ENCODE measurements at regions of chr7 and their contacts with region 1.

Region 1: DNA sequence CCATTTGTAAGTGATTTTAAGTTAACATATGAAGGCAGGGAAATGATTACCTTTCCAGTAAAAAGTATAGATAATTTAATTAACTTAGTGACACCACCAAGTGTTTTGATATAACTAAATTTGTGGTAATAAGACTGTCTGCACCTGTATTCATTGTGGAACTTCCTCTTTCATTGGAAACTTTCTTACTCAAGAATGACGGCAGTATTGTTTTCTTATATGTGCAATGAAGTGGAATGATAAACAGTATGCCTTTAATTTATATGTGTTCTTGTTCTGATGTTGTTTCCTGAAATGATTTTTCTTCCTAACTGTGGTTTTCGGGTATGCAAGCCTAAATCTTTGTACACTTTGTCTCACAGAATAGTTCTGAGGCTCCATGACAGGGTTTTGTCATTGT is 46.4 kb downstream of the CASD1 start:
- DNase-seq: peak; percentile 57
- ATAC-seq: peak; percentile 88
- H3K4me3 ChIP-seq: peak overlapping the region in 1 of 5 experiments; percentile 27
- H3K4me3 Mint-ChIP-seq: peak overlapping the region; percentile 58
- H3K27ac ChIP-seq: peak overlapping the region in 1 of 2 donors; percentile 48
- H3K27ac Mint-ChIP-seq: peak overlapping the region; percentile 75
- H3K4me1 ChIP-seq: peaks cover 19 to 32% of the 10 kb centered on the region in 2 donors
- H3K4me1 Mint-ChIP-seq: peaks cover 39% of the 10 kb centered on the region
- H3K27me3 ChIP-seq: no peaks in the 10 kb centered on the region
- H3K27me3 Mint-ChIP-seq: no peaks in the 10 kb centered on the region
- CTCF ChIP-seq: no peak

Region 2: GRCh38 chr7:94509879-94510581 is 46.0 kb before region 1 on chr7:
- CTCF ChIA-PET with region 1: no interaction called
- POLR2A ChIA-PET with region 1: no interaction called
- intact Hi-C with region 1: loop called (anchors 1 kb)
- DNase-seq: peak; percentile 88
- ATAC-seq: peak; percentile 76
- H3K4me3 ChIP-seq: peak overlapping the region; percentile 31 to 80 (median 73)
- H3K4me3 Mint-ChIP-seq: peak overlapping the region; percentile 88
- H3K27ac ChIP-seq: peak overlapping the region; percentile 77 to 92
- H3K27ac Mint-ChIP-seq: peak overlapping the region; percentile 93
- H3K4me1 ChIP-seq: peaks cover 18 to 20% of the 10 kb centered on the region in 2 donors
- H3K4me1 Mint-ChIP-seq: peaks cover 46% of the 10 kb centered on the region
- H3K27me3 ChIP-seq: no peaks in the 10 kb centered on the region
- H3K27me3 Mint-ChIP-seq: no peaks in the 10 kb centered on the region
- CTCF ChIP-seq: peak; percentile 5

Region 3: DNA sequence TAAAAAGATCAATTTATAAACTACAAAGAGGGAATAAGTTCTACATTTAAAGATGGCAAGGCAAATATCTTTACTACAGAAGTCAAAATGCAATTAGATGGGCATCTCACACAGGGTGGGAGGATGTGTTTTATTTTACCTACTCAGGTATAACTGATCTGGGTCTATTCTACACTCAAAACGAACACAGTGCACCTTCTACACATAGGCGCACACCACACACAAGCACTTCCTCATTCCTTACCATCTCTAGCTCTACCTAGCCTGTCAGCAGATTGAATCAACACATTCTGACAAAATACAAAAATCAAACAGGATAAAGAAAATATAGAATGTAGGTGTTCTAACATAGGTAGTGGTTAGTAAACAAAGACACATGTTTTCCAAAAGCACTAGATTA is 35.1 kb after region 1 on chr7:
- CTCF ChIA-PET with region 1: no interaction called
- POLR2A ChIA-PET with region 1: no interaction called
- intact Hi-C with region 1: loop called (anchors 5 kb)
- DNase-seq: peak; percentile 51
- ATAC-seq: peak; percentile 83
- H3K4me3 ChIP-seq: peak overlapping the region in 4 of 5 experiments; percentile 19 to 55 (median 42)
- H3K4me3 Mint-ChIP-seq: peak overlapping the region; percentile 67
- H3K27ac ChIP-seq: peak overlapping the region; percentile 36 to 52
- H3K27ac Mint-ChIP-seq: peak overlapping the region; percentile 1
- H3K4me1 ChIP-seq: peaks cover 11 to 17% of the 10 kb centered on the region in 2 donors
- H3K4me1 Mint-ChIP-seq: peaks cover 19% of the 10 kb centered on the region
- H3K27me3 ChIP-seq: no peaks in the 10 kb centered on the region
- H3K27me3 Mint-ChIP-seq: no peaks in the 10 kb centered on the region
- CTCF ChIP-seq: no peak

Region 4: DNA sequence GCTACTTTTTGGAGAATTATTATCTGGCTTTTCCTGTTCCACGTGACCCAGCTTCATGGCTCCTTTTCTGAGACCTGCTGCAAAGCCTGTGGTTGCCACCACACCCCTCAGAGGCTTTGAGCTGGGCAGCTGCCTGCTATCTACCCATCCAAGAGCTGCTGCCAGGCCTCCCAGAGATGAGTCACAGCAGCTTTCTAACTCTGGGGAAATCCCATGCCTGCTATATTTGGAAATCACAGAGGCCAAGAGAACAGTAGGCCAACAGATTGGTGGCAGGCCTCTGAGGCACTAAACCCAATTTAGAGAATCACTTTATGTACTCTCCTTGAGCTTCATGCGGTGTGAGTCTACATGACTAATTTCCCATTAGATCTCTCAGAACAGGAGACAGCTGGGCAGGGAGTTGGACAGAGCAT is 64.7 kb after region 1 on chr7:
- CTCF ChIA-PET with region 1: interaction called, 4 read pairs
- POLR2A ChIA-PET with region 1: no interaction called
- intact Hi-C with region 1: loop called (anchors 1 kb)
- DNase-seq: peak; percentile 18
- ATAC-seq: peak; percentile 93
- H3K4me3 ChIP-seq: no peak overlapping the region
- H3K4me3 Mint-ChIP-seq: no peak overlapping the region
- H3K27ac ChIP-seq: no peak overlapping the region
- H3K27ac Mint-ChIP-seq: peak overlapping the region; percentile 65
- H3K4me1 ChIP-seq: peaks cover 5 to 7% of the 10 kb centered on the region in 2 donors
- H3K4me1 Mint-ChIP-seq: peaks cover 10% of the 10 kb centered on the region
- H3K27me3 ChIP-seq: no peaks in the 10 kb centered on the region
- H3K27me3 Mint-ChIP-seq: no peaks in the 10 kb centered on the region
- CTCF ChIP-seq: no peak

Region 5: DNA sequence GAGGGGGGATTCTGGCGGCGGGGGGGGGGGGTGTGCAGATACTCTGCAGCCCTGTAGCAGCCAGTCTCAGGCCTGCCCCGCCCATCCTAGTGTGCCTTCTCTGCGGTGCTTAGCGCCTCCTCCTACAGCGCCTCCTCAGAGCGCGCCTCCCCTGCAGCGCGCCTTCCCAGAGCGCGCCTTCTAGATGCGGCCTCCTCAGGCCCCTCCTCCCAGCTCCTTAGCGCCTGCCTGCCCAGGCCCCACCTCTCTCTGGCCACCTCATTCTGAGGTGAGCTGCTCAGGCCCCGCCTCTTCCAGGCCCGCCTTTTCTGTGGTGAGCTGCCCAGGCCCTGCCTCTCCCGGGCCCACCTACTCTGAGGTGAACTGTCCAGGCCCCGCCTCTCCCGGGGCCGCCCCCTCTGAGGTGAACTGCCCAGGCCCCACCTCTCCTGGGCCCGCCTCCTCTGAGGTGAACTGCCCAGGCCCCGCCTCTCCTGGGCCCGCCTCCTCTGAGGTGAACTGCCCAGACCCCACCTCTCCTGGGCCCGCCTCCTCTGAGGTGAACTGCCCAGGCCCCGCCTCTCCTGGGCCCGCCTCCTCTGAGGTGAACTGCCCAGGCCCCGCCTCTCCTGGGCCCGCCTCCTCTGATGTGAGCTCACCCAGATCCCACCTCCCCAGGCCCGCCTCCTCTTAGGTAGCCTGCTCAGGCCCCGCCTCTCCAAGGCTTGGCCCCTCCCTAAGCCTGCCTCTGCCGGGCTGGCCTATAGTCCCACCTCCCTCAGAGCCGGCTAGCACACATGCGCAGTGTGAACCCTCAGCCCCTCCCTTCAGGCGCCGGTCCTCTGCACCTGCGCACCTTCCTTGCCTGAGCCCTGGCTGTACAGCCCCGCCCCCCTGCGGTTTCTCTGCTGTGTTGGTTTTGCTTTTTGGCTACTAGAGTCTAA is 102.0 kb after region 1 on chr7:
- CTCF ChIA-PET with region 1: no interaction called
- POLR2A ChIA-PET with region 1: no interaction called
- intact Hi-C with region 1: loop called (anchors 5 kb)
- DNase-seq: peak; percentile 97
- ATAC-seq: peak; percentile 78
- H3K4me3 ChIP-seq: peak overlapping the region in 4 of 5 experiments; percentile 45 to 71 (median 64)
- H3K4me3 Mint-ChIP-seq: peak overlapping the region; percentile 94
- H3K27ac ChIP-seq: no peak overlapping the region
- H3K27ac Mint-ChIP-seq: peak overlapping the region; percentile 82
- H3K4me1 ChIP-seq: peaks cover 16 to 29% of the 10 kb centered on the region in 2 donors
- H3K4me1 Mint-ChIP-seq: peaks cover 26% of the 10 kb centered on the region
- H3K27me3 ChIP-seq: peaks cover 0 to 18% (median 13%) of the 10 kb centered on the region in 4 experiments
- H3K27me3 Mint-ChIP-seq: peaks cover 14% of the 10 kb centered on the region
- CTCF ChIP-seq: no peak

Measured in B cell (primary cell).